ENCODE measurements at regions of chr1 and their contacts with region 1.

Region 1: GRCh38 chr1:3471302-3472087 is 17.0 kb downstream of the ARHGEF16 start:
- DNase-seq: no peak
- H3K4me3 ChIP-seq: no peak overlapping the region
- H3K27ac ChIP-seq: no peak overlapping the region
- H3K4me1 ChIP-seq: peaks cover 57% of the 10 kb centered on the region
- H3K27me3 ChIP-seq: no peaks in the 10 kb centered on the region
- CTCF ChIP-seq: peak; percentile 7 to 47

Region 2: GRCh38 chr1:3539707-3540425 is 68.4 kb after region 1 on chr1:
- CTCF ChIA-PET with region 1: no interaction called
- dilution Hi-C with region 1: loop called (anchors 5 kb)
- in situ Hi-C with region 1: no loop called
- intact Hi-C with region 1: no loop called
- DNase-seq: peak; percentile 71
- H3K4me3 ChIP-seq: no peak overlapping the region
- H3K27ac ChIP-seq: no peak overlapping the region
- H3K4me1 ChIP-seq: peaks cover 43% of the 10 kb centered on the region
- H3K27me3 ChIP-seq: no peaks in the 10 kb centered on the region
- CTCF ChIP-seq: no peak

Region 3: GRCh38 chr1:3649342-3650247 is 178.1 kb after region 1 on chr1 and contains the start of gene WRAP73:
- CTCF ChIA-PET with region 1: no interaction called
- dilution Hi-C with region 1: loop called (anchors 10 kb)
- in situ Hi-C with region 1: no loop called
- intact Hi-C with region 1: no loop called
- DNase-seq: peak; percentile 85
- H3K4me3 ChIP-seq: peak within 1 kb of the TSS; percentile 67 to 89 (median 67)
- H3K27ac ChIP-seq: no peak within 1 kb of the TSS
- H3K4me1 ChIP-seq: peaks cover 15% of the 10 kb centered on the region
- H3K27me3 ChIP-seq: peaks cover 27% of the 10 kb centered on the region
- CTCF ChIP-seq: peak; percentile 2 to 20
- total RNA-seq, gene WRAP73: 8.3 to 26.6 TPM